Posterior vena cava (tissue), 2 donors: ENCODE measurements at regions of chr13 and their contacts with region 1.

Region 1: GRCh38 chr13:99738626-99739025 is 232.9 kb downstream of the ZIC5 start:
- DNase-seq: no peak

Region 2: DNA sequence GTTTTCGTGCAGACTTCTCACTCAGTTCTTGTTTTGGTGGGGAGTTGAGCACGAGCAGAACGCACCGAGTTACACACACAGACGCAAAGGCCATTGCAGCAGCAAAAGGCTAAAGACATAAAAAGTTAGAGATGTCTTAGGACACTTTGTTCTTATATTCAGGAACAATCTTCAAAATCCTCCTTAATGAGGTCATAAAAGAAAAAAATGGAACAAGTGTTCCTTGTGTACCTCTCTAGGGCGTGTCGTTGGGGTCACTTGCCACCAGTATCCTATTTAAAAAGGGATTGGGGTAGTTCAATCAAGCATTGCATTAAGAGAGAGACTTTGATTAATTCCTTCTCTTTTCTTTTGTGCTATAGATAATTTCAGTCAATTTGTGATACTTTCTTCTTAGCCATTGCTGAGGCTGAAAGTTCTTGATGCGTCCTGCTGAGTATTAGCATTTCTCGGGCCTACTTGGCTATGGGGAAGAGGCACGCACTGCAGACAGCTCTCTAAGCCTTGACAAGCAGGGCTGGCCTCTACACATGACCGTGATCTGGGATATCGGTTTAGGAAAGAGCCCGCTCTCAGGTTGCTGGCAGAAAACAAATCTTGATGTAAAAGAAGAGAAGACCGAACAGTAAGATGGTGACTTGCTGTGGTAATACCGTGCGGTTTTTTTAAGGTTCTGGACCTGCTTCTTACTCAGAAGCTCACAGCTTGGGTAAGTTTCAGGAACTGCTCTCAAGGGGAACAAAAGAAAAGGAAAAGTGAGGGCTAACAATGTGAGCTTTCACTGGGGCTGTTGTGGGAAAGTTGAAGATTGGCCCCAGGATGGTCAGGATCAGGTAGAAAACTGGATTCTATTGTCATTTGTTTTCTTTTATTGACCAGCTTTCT is 13.8 kb before region 1 on chr13:
- intact Hi-C with region 1: loop called in 1 of 2 experiments (anchors 1 kb)
- DNase-seq: no peak

Region 3: GRCh38 chr13:99749271-99750019 is 10.8 kb after region 1 on chr13:
- intact Hi-C with region 1: no loop called
- DNase-seq: no peak